ENCODE measurements at regions of chr17 and their contacts with region 1.

Region 1: DNA sequence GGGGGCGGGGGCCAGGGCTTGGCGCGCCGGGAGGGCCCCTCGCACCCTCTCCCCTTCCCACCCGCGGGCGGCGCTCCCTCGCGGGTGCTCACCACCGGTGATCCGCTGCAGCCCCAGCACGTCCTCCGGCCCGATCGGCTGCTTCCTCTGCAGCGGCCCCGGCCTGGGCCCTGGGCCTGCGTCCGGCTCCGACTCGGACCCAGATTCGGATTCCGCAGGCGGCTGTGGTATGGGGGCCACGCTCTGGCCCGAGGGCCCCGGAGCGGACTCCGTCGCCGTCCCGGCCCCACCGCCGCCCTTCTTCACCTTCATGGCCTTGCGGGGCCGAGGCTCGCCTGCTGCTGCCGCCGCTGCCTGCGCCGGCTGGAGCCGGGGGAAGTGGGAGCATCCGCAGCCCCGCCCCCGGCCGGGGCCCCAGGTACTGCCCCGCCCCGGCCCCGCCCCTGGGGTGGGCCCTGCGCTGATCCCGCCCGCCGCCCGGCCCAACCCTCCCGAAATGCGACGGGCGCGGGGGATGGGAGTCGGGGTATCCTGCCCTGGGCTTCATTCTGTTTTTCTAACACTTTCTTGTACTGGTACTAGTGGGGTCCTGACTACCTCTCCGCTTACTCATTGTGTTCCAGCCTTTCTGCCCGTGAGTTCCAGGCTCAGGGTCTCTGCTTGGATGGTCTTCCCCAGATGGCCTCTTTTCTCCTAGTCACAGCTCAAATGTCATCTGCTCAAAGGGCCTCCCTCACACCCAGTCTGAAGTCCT is at the start of gene UNC119:
- DNase-seq: no peak
- H3K4me3 ChIP-seq: peak within 1 kb of the TSS; percentile 73 to 78
- H3K27ac ChIP-seq: peak within 1 kb of the TSS; percentile 52
- H3K4me1 ChIP-seq: peaks cover 13% of the 10 kb centered on the region
- H3K27me3 ChIP-seq: no peaks in the 10 kb centered on the region
- CTCF ChIP-seq: no peak
- POLR2A ChIP-seq: peak in 1 of 2 donors; percentile 55
- total RNA-seq, gene UNC119: 38.1 TPM

Region 2: DNA sequence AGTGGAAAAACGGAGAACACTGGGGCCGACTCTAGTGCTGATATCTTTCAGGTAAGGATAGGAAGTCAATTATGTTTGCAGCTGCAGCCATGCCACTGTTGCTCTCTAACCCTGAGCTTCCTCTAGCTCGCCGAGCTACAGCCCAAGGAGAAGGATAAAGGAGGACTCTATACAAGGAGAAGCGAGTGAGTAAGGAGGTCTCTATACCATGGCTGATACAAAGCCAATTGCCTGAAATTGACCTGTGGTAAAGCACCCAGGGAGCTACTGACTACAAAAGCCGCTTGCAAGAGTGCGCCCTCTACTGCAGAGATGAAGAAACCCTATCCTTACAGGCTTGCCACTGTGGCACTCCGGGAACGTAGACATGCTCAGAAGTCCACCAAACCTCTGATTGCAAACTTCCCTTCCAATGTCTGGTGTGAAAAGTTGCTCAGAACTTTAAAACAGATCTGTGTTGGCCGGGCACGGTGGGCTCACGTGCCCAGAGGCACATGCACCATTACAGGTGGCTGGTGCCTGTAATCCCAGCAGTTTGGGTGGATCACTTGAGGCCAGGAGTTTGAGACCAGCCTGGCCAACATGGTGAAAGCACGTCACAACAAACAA is 135.6 kb before region 1 on chr17:
- intact Hi-C with region 1: no loop called
- DNase-seq: no peak
- H3K4me3 ChIP-seq: no peak overlapping the region
- H3K27ac ChIP-seq: no peak overlapping the region
- H3K4me1 ChIP-seq: no peaks in the 10 kb centered on the region
- H3K27me3 ChIP-seq: no peaks in the 10 kb centered on the region
- CTCF ChIP-seq: peak in 2 of 3 experiments; percentile 17 to 18
- POLR2A ChIP-seq: no peak

Region 3: DNA sequence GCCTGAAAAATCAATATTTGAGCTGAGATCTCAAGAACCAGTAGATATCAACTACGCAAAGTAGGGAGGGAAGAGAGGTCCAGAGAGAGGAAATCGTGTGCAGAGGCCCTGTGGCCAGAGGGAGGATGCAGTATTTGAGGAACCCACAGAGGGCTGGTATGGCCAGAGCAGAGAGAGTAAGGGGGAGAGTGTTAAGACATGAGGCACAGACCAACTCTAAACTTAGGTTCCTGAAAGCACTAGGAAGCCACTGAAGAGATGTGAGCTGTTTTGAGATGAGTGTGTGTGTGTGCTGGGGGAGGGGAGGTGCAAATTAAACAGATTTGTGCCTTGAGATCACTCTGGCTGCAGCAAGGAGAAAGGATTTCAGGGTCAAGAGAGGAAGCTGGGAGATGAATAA is 68.1 kb before region 1 on chr17:
- intact Hi-C with region 1: no loop called
- DNase-seq: no peak
- H3K4me3 ChIP-seq: no peak overlapping the region
- H3K27ac ChIP-seq: no peak overlapping the region
- H3K4me1 ChIP-seq: no peaks in the 10 kb centered on the region
- H3K27me3 ChIP-seq: no peaks in the 10 kb centered on the region
- CTCF ChIP-seq: no peak
- POLR2A ChIP-seq: no peak

Region 4: DNA sequence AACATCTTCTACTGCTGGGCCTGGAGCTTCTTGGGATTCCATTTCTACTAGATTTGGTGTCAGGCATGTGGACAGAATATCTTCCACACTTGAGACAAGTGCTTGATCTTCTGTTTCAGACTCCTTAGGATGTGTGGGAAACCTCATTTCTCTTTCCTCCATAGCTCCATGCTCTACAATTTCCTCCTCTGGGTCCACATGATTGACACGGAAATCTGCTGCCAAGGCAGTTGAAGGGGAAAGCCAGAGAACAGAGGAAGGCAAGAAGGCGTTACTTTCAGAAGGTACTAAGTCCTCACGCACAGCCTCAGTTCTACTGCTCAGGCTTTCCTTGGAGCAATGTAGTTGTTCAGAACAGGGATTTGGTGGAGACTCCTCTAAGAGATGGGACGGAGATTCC is 39.8 kb after region 1 on chr17:
- intact Hi-C with region 1: loop called (anchors 2 kb)
- DNase-seq: no peak
- H3K4me3 ChIP-seq: no peak overlapping the region
- H3K27ac ChIP-seq: no peak overlapping the region
- H3K4me1 ChIP-seq: no peaks in the 10 kb centered on the region
- H3K27me3 ChIP-seq: no peaks in the 10 kb centered on the region
- CTCF ChIP-seq: no peak
- POLR2A ChIP-seq: no peak

Measured in vagina (tissue), 2 donors.